GM10248 (cell line): ENCODE measurements at regions of chr2 and their contacts with region 1.

Region 1: GRCh38 chr2:173027181-173028128 is 48.2 kb upstream of the MAP3K20 start:
- DNase-seq: peak; percentile 64
- CTCF ChIP-seq: peak; percentile 89

Region 2: GRCh38 chr2:173002751-173003541 is 24.5 kb before region 1 on chr2:
- CTCF ChIA-PET with region 1: interaction called, 10 read pairs
- POLR2A ChIA-PET with region 1: no interaction called
- DNase-seq: no peak
- CTCF ChIP-seq: no peak

Region 3: GRCh38 chr2:173037245-173038120 is 10.0 kb after region 1 on chr2:
- CTCF ChIA-PET with region 1: interaction called, 31 read pairs
- POLR2A ChIA-PET with region 1: no interaction called
- DNase-seq: no peak
- CTCF ChIP-seq: no peak

Region 4: DNA sequence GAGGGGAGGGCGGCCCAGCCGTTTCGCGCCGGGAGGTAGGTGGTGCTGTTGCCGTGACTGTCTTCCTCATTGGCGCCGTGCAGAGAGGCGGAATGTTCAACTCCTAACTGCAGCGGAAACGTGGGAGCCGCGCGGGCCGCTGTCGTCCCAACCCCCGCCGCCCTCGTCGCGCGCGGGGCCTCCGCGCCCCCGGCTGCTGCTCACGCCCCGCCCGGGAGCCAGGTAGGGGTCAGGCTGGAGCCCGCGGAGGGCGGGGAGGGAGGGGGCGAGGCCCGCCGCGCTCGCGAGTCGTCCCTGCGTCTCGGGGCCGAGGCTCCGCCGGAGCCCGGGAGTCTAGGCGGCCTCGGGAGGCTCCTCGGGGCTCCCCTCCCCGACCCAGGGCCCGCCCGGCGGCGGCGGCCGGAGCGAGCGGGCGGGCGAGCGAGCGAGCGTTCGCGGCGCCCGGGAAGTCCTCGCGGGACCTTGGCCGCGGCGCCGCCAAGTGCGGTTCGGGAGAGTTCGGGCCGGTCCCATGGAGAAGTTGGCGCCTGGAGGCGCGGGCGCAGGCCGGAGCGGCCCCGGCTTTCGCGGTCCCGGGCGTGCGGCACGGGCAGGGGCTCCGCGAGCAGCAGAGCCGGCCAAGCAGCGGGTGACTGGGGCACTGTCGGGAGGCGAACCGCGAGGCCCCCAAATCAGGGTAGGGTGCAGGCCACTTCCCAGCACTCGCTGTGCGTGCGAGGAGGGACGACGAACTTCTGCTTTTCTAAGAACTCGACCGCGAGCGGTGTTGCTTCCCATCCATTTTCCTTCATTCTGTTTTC is 48.5 kb after region 1 on chr2 and contains the start of gene MAP3K20:
- CTCF ChIA-PET with region 1: interaction called, 13 read pairs
- POLR2A ChIA-PET with region 1: no interaction called
- DNase-seq: peak; percentile 72
- CTCF ChIP-seq: peak; percentile 53

Region 5: GRCh38 chr2:173210270-173211196 is 183.1 kb after region 1 on chr2:
- CTCF ChIA-PET with region 1: interaction called, 323 read pairs
- POLR2A ChIA-PET with region 1: no interaction called
- DNase-seq: peak; percentile 62
- CTCF ChIP-seq: peak; percentile 90

Region 6: DNA sequence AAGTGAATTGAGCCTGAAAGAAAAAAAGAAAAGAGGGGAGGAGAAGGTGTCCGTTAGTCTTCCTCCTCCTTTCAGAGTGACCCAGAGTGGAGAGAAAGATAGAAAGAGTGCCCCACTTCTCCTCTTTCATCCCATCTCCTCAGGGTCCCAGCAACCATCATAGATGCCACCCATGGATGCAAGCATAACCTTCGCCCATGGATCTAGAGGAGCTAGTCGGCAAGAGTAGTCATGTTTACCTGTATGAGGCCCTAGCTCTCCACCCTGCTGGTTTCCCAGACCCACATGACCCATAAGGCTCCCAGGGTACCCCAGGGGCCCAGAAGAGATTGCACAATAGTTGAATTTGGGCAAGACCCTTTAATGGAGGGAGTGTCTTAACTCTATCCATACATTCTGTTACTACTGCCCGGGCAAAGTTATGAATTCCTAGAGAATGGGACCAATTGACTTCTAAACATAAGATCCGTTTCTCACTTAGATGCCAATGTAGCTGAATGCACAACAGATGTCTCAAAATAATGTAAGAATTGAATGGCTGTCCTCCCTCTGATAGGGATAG is 271.2 kb after region 1 on chr2:
- CTCF ChIA-PET with region 1: no interaction called
- POLR2A ChIA-PET with region 1: no interaction called
- DNase-seq: no peak
- CTCF ChIP-seq: no peak

Region 7: GRCh38 chr2:173402405-173402974 is 375.0 kb after region 1 on chr2:
- CTCF ChIA-PET with region 1: interaction called, 24 read pairs
- POLR2A ChIA-PET with region 1: no interaction called
- DNase-seq: peak; percentile 76
- CTCF ChIP-seq: peak; percentile 79